Ascending aorta (tissue), 2 donors: ENCODE measurements at regions of chr13 and their contacts with region 1.

Region 1: GRCh38 chr13:48334534-48335127 is 31.1 kb downstream of the RB1 start:
- DNase-seq: no peak
- H3K4me3 ChIP-seq: no peak overlapping the region
- H3K27ac ChIP-seq: no peak overlapping the region
- H3K4me1 ChIP-seq: no peaks in the 10 kb centered on the region
- H3K27me3 ChIP-seq: no peaks in the 10 kb centered on the region
- CTCF ChIP-seq: peak; percentile 50 to 72 (median 54)

Region 2: GRCh38 chr13:47903836-47904235 is 430.8 kb before region 1 on chr13:
- intact Hi-C with region 1: no loop called
- DNase-seq: no peak
- H3K4me3 ChIP-seq: peak overlapping the region; percentile 23 to 26
- H3K27ac ChIP-seq: no peak overlapping the region
- H3K4me1 ChIP-seq: no peaks in the 10 kb centered on the region
- H3K27me3 ChIP-seq: no peaks in the 10 kb centered on the region
- CTCF ChIP-seq: no peak

Region 3: DNA sequence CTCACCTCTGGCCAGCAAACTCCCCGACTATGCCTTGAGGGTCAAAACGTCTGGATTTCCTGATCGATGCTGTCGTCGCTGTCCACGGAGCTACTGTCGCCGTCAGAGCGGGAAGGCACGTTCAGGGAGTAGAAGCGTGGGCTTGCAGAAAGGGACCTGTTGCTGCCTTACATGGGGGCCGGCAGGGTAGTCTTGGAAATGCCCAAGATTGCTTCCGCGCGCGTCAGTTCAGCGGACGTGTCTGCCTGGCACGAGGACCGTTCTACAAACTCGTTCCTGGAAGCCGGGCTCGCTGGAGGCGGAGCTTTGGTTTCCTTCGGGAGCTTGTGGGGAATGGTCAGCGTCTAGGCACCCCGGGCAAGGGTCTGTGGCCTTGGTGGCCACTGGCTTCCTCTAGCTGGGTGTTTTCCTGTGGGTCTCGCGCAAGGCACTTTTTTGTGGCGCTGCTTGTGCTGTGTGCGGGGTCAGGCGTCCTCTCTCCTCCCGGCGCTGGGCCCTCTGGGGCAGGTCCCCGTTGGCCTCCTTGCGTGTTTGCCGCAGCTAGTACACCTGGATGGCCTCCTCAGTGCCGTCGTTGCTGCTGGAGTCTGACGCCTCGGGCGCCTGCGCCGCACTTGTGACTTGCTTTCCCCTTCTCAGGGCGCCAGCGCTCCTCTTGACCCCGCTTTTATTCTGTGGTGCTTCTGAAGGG is 15.7 kb before region 1 on chr13:
- intact Hi-C with region 1: no loop called
- DNase-seq: peak in 1 of 2 donors; percentile 71
- H3K4me3 ChIP-seq: peak overlapping the region in 1 of 2 donors; percentile 51
- H3K27ac ChIP-seq: peak overlapping the region; percentile 0 to 5
- H3K4me1 ChIP-seq: no peaks in the 10 kb centered on the region
- H3K27me3 ChIP-seq: no peaks in the 10 kb centered on the region
- CTCF ChIP-seq: no peak

Region 4: DNA sequence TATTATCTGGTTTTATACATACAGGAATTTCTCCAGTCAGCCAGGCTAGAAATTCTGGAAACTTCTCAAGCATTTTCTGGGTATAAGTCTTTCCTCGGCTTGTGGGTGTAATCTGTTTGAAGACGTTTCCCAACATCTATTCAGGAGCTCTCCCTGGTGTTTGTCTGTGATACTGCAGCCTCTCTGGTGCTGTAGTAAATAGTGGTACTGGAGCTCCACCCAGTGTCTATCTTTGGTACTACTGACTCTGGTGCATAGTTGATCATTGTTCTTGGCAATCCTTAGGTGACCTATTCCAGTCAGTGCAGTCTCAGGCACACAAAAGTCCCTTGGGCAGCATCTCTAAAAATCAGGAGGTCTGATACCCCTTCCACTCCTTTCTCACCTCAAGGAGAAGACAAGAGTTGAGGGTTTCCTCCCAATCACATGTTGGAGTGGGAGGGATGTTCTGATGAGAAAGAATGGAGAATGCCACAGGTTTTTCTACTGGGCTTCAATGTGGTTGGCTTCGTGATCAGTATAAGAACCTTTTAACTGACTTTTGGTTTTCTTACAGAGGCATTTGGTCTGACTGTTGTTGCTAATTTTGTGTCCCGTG is 434.6 kb after region 1 on chr13:
- intact Hi-C with region 1: loop called (anchors 2 kb)
- DNase-seq: peak in 1 of 2 donors; percentile 92
- H3K4me3 ChIP-seq: no peak overlapping the region
- H3K27ac ChIP-seq: no peak overlapping the region
- H3K4me1 ChIP-seq: no peaks in the 10 kb centered on the region
- H3K27me3 ChIP-seq: no peaks in the 10 kb centered on the region
- CTCF ChIP-seq: peak; percentile 91 to 99 (median 92)